CD4-positive, alpha-beta memory T cell (primary cell): ENCODE measurements at regions of chr5 and their contacts with region 1.

Region 1: GRCh38 chr5:157265714-157266285 is at the start of gene CYFIP2:
- DNase-seq: peak; percentile 84 to 88 (median 85)
- H3K4me3 ChIP-seq: peak within 1 kb of the TSS; percentile 62 to 75
- H3K4me3 Mint-ChIP-seq: peak within 1 kb of the TSS; percentile 95 to 100 (median 97)
- H3K27ac ChIP-seq: peak within 1 kb of the TSS; percentile 78
- H3K27ac Mint-ChIP-seq: peak within 1 kb of the TSS; percentile 97 to 99 (median 98)
- H3K4me1 ChIP-seq: peaks cover 65% of the 10 kb centered on the region
- H3K4me1 Mint-ChIP-seq: peaks cover 48 to 82% (median 66%) of the 10 kb centered on the region in 4 donors
- H3K27me3 ChIP-seq: no peaks in the 10 kb centered on the region
- H3K27me3 Mint-ChIP-seq: no peaks in the 10 kb centered on the region
- total RNA-seq, gene CYFIP2: 317 to 325 TPM

Region 2: GRCh38 chr5:157283434-157283833 is 17.6 kb after region 1 on chr5:
- CTCF ChIA-PET with region 1: interaction called, 4 read pairs
- POLR2A ChIA-PET with region 1: interaction called, 191 read pairs
- intact Hi-C with region 1: loop called (anchors 2 kb)
- DNase-seq: peak in 1 of 5 donors; percentile 32
- H3K4me3 ChIP-seq: no peak overlapping the region
- H3K4me3 Mint-ChIP-seq: peak overlapping the region in 7 of 8 donors; percentile 1 to 55 (median 46)
- H3K27ac ChIP-seq: no peak overlapping the region
- H3K27ac Mint-ChIP-seq: peak overlapping the region; percentile 33 to 91 (median 78)
- H3K4me1 ChIP-seq: peaks cover 88% of the 10 kb centered on the region
- H3K4me1 Mint-ChIP-seq: peaks cover 61 to 85% (median 68%) of the 10 kb centered on the region in 4 donors
- H3K27me3 ChIP-seq: no peaks in the 10 kb centered on the region
- H3K27me3 Mint-ChIP-seq: no peaks in the 10 kb centered on the region

Region 3: GRCh38 chr5:157303667-157304327 is 38.0 kb after region 1 on chr5:
- CTCF ChIA-PET with region 1: interaction called, 25 read pairs
- POLR2A ChIA-PET with region 1: interaction called, 41 read pairs
- intact Hi-C with region 1: no loop called
- DNase-seq: peak; percentile 54 to 72 (median 66)
- H3K4me3 ChIP-seq: peak overlapping the region; percentile 27 to 33
- H3K4me3 Mint-ChIP-seq: peak overlapping the region; percentile 78 to 94 (median 86)
- H3K27ac ChIP-seq: peak overlapping the region; percentile 23
- H3K27ac Mint-ChIP-seq: peak overlapping the region; percentile 79 to 94 (median 93)
- H3K4me1 ChIP-seq: peaks cover 60% of the 10 kb centered on the region
- H3K4me1 Mint-ChIP-seq: peaks cover 48 to 69% (median 60%) of the 10 kb centered on the region in 4 donors
- H3K27me3 ChIP-seq: no peaks in the 10 kb centered on the region
- H3K27me3 Mint-ChIP-seq: no peaks in the 10 kb centered on the region